Ascending aorta (tissue), 2 donors: ENCODE measurements at regions of chr2 and their contacts with region 1.

Region 1: DNA sequence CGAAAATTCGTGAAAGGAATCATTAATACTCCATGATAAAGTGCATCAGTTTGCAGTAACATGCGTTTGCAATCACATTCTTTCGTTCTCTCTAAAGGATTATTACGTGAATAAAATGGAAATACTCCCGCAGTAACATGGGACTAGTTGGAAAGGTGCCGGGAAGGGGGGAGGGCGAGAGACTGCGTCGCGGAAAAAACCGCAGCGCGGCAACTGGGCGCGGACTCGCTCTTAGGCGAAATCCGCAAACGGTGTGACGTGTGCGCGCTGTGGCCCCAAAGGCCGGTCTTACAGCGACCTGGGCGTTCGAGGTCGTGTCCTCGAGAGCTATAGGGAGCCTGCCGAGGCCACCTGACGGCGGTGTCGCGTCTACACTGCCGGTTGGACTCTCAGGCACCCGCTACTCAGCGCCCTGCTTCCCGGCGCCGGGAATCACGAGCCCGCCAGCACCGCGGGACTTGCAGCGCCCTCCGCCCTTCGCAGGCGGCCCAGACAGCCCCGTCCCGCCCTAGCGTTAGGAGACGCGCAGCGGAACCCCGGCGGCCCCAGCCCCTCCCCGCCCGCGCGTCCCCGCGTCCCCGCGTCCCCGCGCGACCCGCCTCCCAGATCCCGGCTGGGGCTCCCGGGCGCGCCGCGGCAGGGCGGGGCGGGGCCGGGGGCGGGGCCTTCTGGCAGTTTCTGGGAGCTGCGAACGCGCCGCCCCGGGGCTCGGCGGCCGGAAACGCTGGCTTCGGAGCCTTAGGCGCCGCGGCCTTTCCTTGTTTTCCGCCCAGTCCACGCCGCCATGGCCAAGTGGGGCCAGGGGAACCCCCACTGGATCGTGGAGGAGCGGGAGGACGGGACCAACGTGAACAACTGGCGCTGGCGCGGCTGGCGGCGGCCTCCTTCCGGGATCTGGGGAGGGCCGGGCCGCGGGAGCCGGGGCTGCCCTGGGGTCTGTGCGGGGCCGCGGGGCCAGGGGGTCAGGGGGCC is 15.1 kb downstream of the C2orf74 start:
- DNase-seq: peak; percentile 76 to 96
- H3K4me3 ChIP-seq: peak overlapping the region; percentile 79 to 90
- H3K27ac ChIP-seq: peak overlapping the region; percentile 98 to 99
- H3K4me1 ChIP-seq: peaks cover 12 to 40% of the 10 kb centered on the region in 2 donors
- H3K27me3 ChIP-seq: no peaks in the 10 kb centered on the region
- CTCF ChIP-seq: peak; percentile 2 to 12 (median 7)

Region 2: DNA sequence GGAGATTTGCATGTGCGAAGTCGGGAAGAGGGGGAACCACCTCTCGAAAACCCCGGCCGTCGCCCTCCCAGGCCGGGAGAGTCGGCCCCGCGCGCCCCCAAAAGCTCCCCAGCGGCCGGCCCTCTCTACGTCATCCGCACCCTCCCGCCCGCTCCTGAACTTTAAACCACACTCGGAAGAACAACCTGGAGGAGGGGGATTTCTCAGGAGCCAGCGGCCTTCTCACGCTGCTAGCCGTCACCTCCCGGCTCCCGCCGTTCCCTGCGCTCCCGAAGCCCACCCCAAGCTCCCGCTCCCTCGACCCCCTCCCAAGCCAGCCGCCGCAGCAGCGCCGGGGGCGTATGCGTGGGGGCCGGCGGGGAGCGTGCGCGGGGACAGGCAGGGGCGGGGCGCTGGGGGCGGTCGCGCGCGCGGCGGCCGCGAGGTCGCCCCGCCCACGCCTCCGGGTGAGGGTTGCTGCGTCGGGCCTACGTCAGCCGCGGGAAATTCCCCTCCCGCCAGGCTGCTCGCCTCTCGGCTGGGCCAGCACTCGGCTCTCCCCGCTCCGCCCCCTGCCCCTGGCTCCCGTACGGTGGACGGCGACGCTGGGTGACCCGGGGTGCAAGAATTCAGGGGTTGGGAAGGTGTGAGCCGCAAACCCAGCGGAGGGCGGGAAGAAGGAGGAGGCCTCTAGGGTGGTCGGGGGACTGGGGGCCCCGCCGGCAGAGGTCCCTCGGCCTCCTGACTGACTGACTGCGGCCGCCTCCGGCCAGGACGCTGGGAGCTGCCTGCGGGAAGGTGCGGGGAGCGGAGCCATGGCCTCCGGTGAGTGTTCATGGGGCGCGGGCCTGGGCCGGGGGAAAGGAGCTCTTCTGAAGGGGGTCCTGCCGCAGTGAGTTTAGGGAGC is 295.8 kb before region 1 on chr2 and contains the start of gene REL:
- intact Hi-C with region 1: loop called (anchors 2 kb)
- DNase-seq: peak; percentile 51 to 92
- H3K4me3 ChIP-seq: peak within 1 kb of the TSS; percentile 85 to 93
- H3K27ac ChIP-seq: peak within 1 kb of the TSS; percentile 91 to 95
- H3K4me1 ChIP-seq: peaks cover 0 to 6% of the 10 kb centered on the region in 2 donors
- H3K27me3 ChIP-seq: no peaks in the 10 kb centered on the region
- CTCF ChIP-seq: no peak
- total RNA-seq, gene REL: 5.3 TPM

Region 3: GRCh38 chr2:61065715-61066709 is 111.0 kb before region 1 on chr2 and contains the start of gene SANBR:
- intact Hi-C with region 1: loop called (anchors 10 kb)
- DNase-seq: peak; percentile 24 to 88
- H3K4me3 ChIP-seq: peak within 1 kb of the TSS; percentile 88 to 91
- H3K27ac ChIP-seq: peak within 1 kb of the TSS; percentile 54 to 59
- H3K4me1 ChIP-seq: no peaks in the 10 kb centered on the region
- H3K27me3 ChIP-seq: no peaks in the 10 kb centered on the region
- CTCF ChIP-seq: no peak
- total RNA-seq, gene SANBR: 10.7 TPM

Region 4: DNA sequence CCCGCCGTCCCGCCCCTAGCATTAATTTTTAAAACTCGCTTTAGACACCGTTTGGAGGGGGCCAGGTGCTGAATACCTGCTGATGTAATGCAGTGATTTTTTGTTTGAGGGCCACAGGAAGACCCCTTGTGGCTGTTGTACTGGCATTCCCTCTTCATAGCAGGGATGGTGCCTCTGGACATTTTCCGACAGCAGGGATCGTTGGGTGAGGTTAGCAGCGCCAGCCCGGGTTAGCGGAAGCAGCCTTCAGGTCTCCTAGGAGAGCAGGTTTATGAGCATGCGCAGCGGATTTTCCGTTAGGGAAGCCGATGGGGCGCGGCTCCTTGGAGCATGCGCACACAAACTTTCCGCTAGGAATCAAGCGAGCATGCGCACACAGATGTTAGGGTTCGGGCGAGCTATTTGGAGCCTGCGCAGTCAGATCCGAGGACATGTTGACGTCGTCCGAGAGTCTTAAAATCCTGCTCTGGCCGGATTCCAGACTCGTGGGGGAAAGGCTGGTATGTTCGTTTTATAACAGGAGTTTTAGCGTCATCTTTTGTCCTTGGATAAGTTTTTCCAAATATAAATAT is 32.3 kb before region 1 on chr2:
- intact Hi-C with region 1: loop called (anchors 1 kb)
- DNase-seq: peak; percentile 79 to 97
- H3K4me3 ChIP-seq: peak overlapping the region; percentile 50 to 72
- H3K27ac ChIP-seq: peak overlapping the region; percentile 62 to 71
- H3K4me1 ChIP-seq: peaks cover 0 to 9% of the 10 kb centered on the region in 2 donors
- H3K27me3 ChIP-seq: no peaks in the 10 kb centered on the region
- CTCF ChIP-seq: no peak

Region 5: DNA sequence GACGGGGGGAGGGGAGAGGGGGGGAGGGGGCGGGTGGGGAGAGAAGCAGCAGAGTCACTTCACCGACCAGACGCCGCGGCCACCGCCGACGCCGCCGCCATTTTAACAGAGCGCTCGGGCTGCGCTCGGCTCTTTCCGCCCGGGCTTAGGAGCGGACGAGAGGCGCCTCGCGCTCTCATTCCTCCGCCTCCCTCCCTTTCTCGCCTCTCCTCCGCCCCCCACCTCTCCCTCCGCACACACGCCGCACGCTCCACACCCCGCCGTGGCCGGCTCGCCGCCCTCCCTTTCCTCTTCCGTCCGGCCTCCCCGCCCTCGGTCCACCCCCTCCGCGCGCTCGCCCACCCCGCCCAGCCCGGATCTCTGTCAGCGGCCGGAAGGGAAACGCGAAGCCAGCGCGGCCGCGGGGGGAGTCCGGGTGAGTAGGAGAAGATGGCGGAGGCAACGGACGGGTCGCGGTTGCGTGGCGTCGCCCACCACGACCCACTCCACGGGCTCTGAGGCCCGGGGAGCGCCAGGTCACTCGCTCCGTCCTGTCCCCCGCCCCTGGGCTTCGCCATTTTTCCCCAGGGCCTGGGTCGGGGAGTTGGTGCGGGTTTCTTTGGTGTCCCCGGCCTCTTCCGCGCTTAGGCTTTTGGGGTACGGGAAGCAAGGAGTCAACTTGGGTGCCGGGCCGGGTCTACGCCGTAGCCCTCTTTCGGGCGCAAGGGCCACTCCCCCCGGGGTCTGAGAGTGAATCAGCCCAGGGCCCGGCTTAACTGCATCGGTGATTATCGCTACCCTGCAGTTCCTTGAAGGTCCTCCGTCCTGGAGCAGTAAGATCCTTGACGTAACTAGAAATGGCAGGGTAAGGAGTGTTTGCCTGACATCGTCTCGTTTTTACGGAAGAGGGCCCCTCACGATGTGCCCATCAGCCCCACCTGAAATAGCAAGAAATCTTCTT is 294.2 kb after region 1 on chr2 and contains the start of gene USP34:
- intact Hi-C with region 1: loop called (anchors 2 kb)
- DNase-seq: peak; percentile 65 to 96
- H3K4me3 ChIP-seq: peak within 1 kb of the TSS; percentile 89 to 96
- H3K27ac ChIP-seq: peak within 1 kb of the TSS; percentile 98 to 99
- H3K4me1 ChIP-seq: peaks cover 0 to 9% of the 10 kb centered on the region in 2 donors
- H3K27me3 ChIP-seq: no peaks in the 10 kb centered on the region
- CTCF ChIP-seq: peak in 1 of 3 experiments; percentile 9
- total RNA-seq, gene USP34: 59.3 TPM

Region 6: GRCh38 chr2:62195421-62196277 is 1018.6 kb after region 1 on chr2 and contains the start of gene B3GNT2:
- intact Hi-C with region 1: loop called (anchors 10 kb)
- DNase-seq: peak in 1 of 2 donors; percentile 88
- H3K4me3 ChIP-seq: peak within 1 kb of the TSS; percentile 90 to 97
- H3K27ac ChIP-seq: peak within 1 kb of the TSS; percentile 90 to 91
- H3K4me1 ChIP-seq: peaks cover 0 to 21% of the 10 kb centered on the region in 2 donors
- H3K27me3 ChIP-seq: no peaks in the 10 kb centered on the region
- CTCF ChIP-seq: no peak
- total RNA-seq, gene B3GNT2: 15.2 TPM

Region 7: DNA sequence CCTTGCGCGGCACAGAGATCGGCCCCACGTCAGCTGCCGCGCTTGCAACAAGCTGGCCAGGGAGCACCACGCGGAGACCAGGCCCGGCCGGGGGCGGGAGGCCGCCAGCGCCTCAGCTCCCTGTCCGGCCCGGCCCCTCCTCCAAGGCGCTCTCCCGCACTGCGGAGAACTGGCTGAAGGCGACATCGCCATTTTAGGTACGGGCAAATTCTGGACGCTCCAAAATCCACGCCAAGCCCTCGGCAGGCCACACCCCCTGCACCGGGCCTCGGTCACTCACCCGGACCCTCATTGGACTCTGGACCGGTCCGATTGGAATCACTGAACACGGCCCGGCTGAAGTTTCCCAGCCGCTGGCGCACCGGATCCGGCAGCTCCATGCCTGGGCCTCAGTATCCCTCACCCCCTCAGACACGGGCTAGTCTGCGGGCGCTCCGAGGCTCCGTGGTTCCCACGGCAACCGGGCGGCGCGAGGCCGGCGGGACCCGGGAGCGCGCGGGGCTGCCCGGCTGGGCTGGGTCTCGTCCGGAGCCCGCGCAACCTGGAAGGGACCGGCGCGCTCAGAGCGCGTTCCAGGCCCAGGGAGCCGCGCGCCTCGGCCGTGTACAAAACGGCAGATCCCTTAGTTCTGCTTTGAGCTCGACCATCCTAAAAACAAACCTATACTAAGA is 1328.8 kb after region 1 on chr2 and contains the start of gene TMEM17:
- intact Hi-C with region 1: loop called (anchors 10 kb)
- DNase-seq: peak; percentile 69 to 94
- H3K4me3 ChIP-seq: peak within 1 kb of the TSS; percentile 67 to 74
- H3K27ac ChIP-seq: peak within 1 kb of the TSS; percentile 85 to 88
- H3K4me1 ChIP-seq: peaks cover 0 to 2% of the 10 kb centered on the region in 2 donors
- H3K27me3 ChIP-seq: no peaks in the 10 kb centered on the region
- CTCF ChIP-seq: no peak
- total RNA-seq, gene TMEM17: not detected